ENCODE measurements at regions of chr10 and their contacts with region 1.

Region 1: DNA sequence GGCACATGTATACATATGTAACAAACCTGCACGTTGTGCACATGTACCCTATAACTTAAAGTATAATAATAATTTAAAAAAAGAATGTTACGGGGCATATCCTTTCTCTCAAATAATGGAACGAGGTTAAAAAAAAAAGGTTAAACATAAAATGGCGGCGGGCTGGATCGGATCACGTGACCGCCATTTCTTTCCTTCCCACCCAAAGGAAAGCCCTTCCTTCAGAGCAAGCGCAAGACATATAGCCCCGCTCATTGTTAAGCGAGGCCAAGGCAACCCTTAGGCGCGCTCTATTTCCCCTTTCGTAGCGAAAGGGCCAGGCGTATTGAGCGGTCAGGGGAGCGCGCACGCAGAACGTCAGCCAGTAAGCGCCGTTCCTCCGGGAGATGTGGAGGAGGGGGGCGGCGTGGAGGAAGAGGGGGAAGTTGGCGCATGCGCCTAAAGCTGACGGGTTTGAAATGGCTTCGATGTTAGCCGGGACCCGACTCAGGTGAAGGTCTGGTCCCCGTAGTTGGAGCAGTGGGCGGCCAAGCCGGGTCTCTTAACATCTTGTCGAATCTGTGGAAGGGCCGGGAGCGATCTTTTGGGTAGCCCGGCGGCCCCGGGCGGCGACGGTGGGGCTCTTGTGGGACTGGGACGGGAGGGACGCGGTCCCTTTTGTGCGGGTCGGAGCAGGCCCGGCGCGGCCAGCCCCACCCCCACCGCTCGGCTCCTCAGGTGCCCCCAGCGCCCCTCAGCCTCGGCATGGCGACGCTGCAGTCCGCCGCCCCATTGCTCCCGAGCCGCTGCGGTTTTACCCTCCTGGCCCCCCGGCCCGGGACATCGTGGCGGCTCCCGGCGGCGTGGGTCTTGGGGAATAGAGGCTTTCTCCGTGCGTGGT is at the start of gene CCAR1:
- DNase-seq: peak; percentile 74 to 98
- H3K4me3 ChIP-seq: peak within 1 kb of the TSS; percentile 83 to 91
- H3K27ac ChIP-seq: peak within 1 kb of the TSS; percentile 91 to 97
- H3K4me1 ChIP-seq: peaks cover 0 to 10% of the 10 kb centered on the region in 2 donors
- H3K27me3 ChIP-seq: no peaks in the 10 kb centered on the region
- CTCF ChIP-seq: no peak
- total RNA-seq, gene CCAR1: 9.5 TPM

Region 2: GRCh38 chr10:68331455-68332258 is 389.4 kb before region 1 on chr10 and contains the start of gene HNRNPH3:
- intact Hi-C with region 1: loop called (anchors 2 kb)
- DNase-seq: peak; percentile 85 to 98
- H3K4me3 ChIP-seq: peak within 1 kb of the TSS; percentile 94 to 98
- H3K27ac ChIP-seq: peak within 1 kb of the TSS; percentile 100
- H3K4me1 ChIP-seq: peaks cover 4 to 5% of the 10 kb centered on the region in 2 donors
- H3K27me3 ChIP-seq: no peaks in the 10 kb centered on the region
- CTCF ChIP-seq: no peak
- total RNA-seq, gene HNRNPH3: 12.6 TPM

Region 3: GRCh38 chr10:68406815-68407548 is 314.1 kb before region 1 on chr10 and contains the start of gene RUFY2:
- intact Hi-C with region 1: loop called (anchors 2 kb)
- DNase-seq: peak; percentile 19 to 86
- H3K4me3 ChIP-seq: peak within 1 kb of the TSS; percentile 86 to 89
- H3K27ac ChIP-seq: peak within 1 kb of the TSS; percentile 91 to 92
- H3K4me1 ChIP-seq: no peaks in the 10 kb centered on the region
- H3K27me3 ChIP-seq: no peaks in the 10 kb centered on the region
- CTCF ChIP-seq: peak in 2 of 3 experiments; percentile 52 to 99
- total RNA-seq, gene RUFY2: 7.5 TPM

Region 4: GRCh38 chr10:68526626-68527307 is 194.3 kb before region 1 on chr10:
- intact Hi-C with region 1: loop called (anchors 1 kb)
- DNase-seq: no peak
- H3K4me3 ChIP-seq: peak overlapping the region; percentile 94 to 95
- H3K27ac ChIP-seq: peak overlapping the region; percentile 95 to 97
- H3K4me1 ChIP-seq: no peaks in the 10 kb centered on the region
- H3K27me3 ChIP-seq: no peaks in the 10 kb centered on the region
- CTCF ChIP-seq: no peak

Region 5: GRCh38 chr10:68560186-68560942 is 160.7 kb before region 1 on chr10 and contains the start of gene TET1:
- intact Hi-C with region 1: loop called (anchors 5 kb)
- DNase-seq: peak in 1 of 2 donors; percentile 62
- H3K4me3 ChIP-seq: peak within 1 kb of the TSS; percentile 59 to 66
- H3K27ac ChIP-seq: no peak within 1 kb of the TSS
- H3K4me1 ChIP-seq: peaks cover 5 to 11% of the 10 kb centered on the region in 2 donors
- H3K27me3 ChIP-seq: no peaks in the 10 kb centered on the region
- CTCF ChIP-seq: no peak
- total RNA-seq, gene TET1: 3.9 TPM

Measured in ascending aorta (tissue), 2 donors.